ENCODE measurements at regions of chr20 and their contacts with region 1.

Region 1: DNA sequence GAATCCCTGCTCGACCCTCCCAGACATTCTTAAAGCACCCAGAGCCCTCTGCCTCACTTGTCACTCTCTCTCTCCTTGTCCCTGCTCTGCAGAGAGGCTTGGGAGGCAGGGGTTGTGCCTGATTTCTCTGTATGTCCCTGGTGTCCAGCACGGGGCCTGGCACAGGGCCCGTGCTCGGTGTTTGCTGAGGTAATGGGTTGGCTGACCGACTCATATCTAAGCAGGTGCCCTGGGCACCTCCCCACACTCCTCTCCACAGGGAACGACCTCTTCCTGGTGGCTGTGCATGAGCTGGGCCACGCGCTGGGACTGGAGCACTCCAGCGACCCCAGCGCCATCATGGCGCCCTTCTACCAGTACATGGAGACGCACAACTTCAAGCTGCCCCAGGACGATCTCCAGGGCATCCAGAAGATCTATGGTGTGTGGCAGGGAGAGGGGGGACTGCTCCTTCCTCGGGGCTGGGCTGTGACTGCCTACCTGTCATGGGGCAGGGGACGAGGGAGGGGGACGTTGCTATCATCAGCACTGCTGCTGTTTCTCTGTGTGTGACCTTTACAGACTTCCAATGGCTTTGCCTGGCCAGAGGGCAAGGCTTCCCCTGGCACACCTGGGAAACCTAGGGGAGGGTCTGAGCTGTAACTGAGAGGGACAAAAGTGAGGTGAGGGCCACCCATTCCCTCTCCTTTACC is 14.2 kb downstream of the MMP24OS start:
- DNase-seq: no peak
- H3K4me3 ChIP-seq: no peak overlapping the region
- H3K27ac ChIP-seq: peak overlapping the region; percentile 47
- H3K27me3 ChIP-seq: no peaks in the 10 kb centered on the region
- CTCF ChIP-seq: no peak

Region 2: GRCh38 chr20:34891166-34892062 is 372.3 kb before region 1 on chr20:
- CTCF ChIA-PET with region 1: no interaction called
- POLR2A ChIA-PET with region 1: no interaction called
- DNase-seq: no peak
- H3K4me3 ChIP-seq: no peak overlapping the region
- H3K27ac ChIP-seq: no peak overlapping the region
- H3K27me3 ChIP-seq: no peaks in the 10 kb centered on the region
- CTCF ChIP-seq: no peak

Region 3: GRCh38 chr20:35199748-35200162 is 63.9 kb before region 1 on chr20:
- CTCF ChIA-PET with region 1: no interaction called
- POLR2A ChIA-PET with region 1: no interaction called
- DNase-seq: no peak
- H3K4me3 ChIP-seq: no peak overlapping the region
- H3K27ac ChIP-seq: no peak overlapping the region
- H3K27me3 ChIP-seq: no peaks in the 10 kb centered on the region
- CTCF ChIP-seq: no peak

Region 4: DNA sequence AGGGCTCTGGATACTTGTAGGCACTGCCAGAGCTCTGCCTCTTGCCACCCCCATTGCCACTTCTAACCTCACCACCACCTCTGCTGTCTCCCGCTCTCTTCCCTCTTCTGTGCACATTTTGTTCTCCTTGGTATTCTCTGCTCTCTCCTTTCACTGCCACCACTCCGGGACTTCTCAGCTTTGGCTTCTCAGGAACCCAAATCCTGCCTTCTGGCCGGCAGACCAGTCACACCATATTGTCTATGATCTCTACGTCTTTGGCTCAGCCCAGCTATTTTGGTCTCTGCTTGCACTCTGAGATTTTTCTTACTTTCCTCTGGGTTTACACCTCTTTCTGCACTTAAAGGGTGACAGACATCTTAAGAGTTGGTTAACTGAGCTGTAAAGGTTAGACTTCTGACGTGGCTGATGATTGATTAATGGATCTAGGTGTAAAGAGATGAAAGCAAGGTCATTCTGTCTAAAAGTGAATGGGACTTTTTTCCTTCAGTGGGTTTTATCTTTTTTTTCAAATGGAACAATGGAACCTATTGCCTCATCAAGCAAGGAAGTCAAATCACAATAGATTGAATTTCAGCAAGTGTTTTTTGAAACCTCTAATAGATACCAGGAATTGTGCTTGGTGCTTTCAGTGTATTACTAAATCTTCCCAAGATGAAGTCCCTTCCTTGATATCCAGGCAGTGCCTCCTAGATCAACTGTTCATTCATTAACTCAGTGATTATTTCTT is 23.4 kb before region 1 on chr20:
- CTCF ChIA-PET with region 1: interaction called, 12 read pairs
- POLR2A ChIA-PET with region 1: no interaction called
- DNase-seq: no peak
- H3K4me3 ChIP-seq: no peak overlapping the region
- H3K27ac ChIP-seq: no peak overlapping the region
- H3K27me3 ChIP-seq: peaks cover 13% of the 10 kb centered on the region
- CTCF ChIP-seq: no peak